ENCODE measurements at regions of chr6 and their contacts with region 1.

Region 1: GRCh38 chr6:148578245-148578732 is 168.5 kb upstream of the UST start:
- DNase-seq: peak; percentile 56
- ATAC-seq: peak; percentile 100
- H3K4me3 Mint-ChIP-seq: no peak overlapping the region
- H3K27ac Mint-ChIP-seq: peak overlapping the region; percentile 55
- H3K4me1 Mint-ChIP-seq: peaks cover 14% of the 10 kb centered on the region
- H3K27me3 Mint-ChIP-seq: peaks cover 7% of the 10 kb centered on the region
- CTCF ChIP-seq: no peak

Region 2: DNA sequence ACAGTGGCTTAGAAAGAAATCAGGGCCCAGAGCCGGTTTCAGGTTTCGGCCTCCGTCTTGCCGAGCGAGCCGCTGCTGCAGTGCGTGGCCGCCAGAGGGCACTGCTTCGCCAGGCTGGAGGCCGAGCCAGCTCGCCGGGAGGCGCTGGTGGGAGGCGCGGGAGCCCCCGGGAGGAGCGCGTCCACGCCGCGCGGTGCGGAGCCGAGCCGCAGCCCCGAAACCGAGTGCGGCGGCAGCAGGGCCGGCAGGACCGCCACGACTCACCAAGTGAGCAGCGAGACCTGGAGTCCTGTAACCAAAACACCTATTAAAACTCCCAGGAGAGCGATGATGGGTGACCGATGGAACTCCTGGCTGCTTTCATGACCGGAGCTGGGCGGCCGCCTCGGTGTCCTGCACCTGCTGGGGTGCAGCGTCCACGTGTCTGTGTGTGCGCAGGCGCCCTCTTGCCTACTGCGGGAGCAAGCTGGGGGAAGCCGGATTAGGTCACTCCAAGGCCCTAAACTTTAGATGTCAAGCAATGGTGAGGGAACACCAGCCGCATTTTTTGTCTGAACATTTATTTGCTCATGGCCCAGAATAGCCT is 18.3 kb before region 1 on chr6:
- CTCF ChIA-PET with region 1: interaction called, 18 read pairs
- POLR2A ChIA-PET with region 1: interaction called, 3 read pairs
- intact Hi-C with region 1: no loop called
- DNase-seq: peak; percentile 74
- ATAC-seq: peak; percentile 87
- H3K4me3 Mint-ChIP-seq: peak overlapping the region; percentile 57
- H3K27ac Mint-ChIP-seq: no peak overlapping the region
- H3K4me1 Mint-ChIP-seq: peaks cover 15% of the 10 kb centered on the region
- H3K27me3 Mint-ChIP-seq: peaks cover 9% of the 10 kb centered on the region
- CTCF ChIP-seq: peak; percentile 18

Region 3: DNA sequence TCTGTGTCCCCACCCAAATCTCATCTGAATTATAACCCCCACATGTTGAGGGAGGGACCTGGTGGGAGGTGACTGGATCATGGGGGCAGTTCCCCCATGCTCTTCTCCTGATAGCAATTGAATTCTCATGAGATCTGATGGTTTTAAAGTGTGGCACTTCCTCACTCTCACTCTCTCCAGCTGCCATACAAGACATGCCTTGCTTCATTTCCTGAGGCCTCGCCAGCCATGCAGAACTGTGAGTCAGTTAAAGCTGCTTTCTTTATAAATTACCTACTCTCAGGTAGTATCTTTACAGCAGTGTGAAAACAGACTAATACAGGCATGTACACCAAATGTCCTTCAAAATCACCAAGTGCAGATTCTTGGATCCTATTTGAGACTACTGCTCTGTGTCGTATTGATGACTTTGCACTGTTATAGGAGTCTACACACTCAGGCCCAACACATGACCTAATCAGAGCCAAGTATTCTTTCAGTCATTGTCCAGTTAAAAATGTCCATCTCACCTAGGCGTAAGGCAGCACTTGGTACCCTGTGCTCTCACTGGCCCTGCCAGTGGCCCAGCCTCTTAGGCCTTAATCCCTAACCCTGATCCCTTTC is 115.7 kb after region 1 on chr6:
- CTCF ChIA-PET with region 1: interaction called, 11 read pairs
- POLR2A ChIA-PET with region 1: no interaction called
- intact Hi-C with region 1: no loop called
- DNase-seq: peak; percentile 33
- ATAC-seq: peak; percentile 98
- H3K4me3 Mint-ChIP-seq: peak overlapping the region; percentile 62
- H3K27ac Mint-ChIP-seq: peak overlapping the region; percentile 90
- H3K4me1 Mint-ChIP-seq: peaks cover 27% of the 10 kb centered on the region
- H3K27me3 Mint-ChIP-seq: no peaks in the 10 kb centered on the region
- CTCF ChIP-seq: no peak

Region 4: DNA sequence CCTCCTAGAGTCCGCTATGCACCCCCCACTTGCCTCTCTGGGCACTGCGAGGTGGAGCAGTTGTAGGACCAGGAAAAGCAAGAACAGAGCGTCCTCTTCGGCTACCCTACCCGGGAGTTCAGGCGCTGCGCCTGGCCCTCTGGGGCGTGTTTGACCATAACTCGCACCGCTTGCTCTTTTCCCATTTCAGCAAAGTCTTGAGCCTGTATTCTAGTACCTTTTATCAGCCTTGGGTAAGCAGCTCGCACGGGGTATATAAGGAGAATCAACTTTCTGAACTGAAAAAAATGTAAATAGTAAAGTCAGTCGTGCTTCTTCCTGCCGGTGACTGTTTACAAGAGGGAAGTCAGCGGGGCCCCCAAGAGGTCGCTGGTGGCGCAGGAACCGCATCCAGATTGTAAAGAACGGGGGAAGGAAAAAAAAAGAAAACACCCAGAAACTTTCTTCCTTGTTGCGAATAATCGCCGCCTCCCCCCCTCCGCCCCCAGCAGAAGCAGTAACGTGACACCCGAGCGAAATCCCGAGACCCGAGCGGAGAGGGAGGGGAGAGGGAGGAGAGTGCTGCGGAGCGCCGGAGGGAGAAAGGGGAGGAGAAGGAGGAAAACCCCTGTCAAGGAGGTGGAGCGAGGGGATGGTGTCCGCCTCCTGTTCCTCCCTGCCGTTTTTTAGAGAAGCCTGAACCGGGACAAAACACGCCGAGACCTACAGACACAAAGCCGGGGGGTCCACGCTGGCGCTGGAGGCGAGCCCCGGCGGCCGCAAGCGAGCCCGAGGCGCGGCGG is 168.3 kb after region 1 on chr6 and contains the start of gene UST:
- CTCF ChIA-PET with region 1: interaction called, 21 read pairs
- POLR2A ChIA-PET with region 1: interaction called, 9 read pairs
- intact Hi-C with region 1: loop called (anchors 1 kb)
- DNase-seq: peak; percentile 55
- ATAC-seq: peak; percentile 47
- H3K4me3 Mint-ChIP-seq: peak within 1 kb of the TSS; percentile 95
- H3K27ac Mint-ChIP-seq: peak within 1 kb of the TSS; percentile 94
- H3K4me1 Mint-ChIP-seq: peaks cover 42% of the 10 kb centered on the region
- H3K27me3 Mint-ChIP-seq: no peaks in the 10 kb centered on the region
- CTCF ChIP-seq: no peak
- total RNA-seq, gene UST: 14.3 and 18.1 TPM in 2 replicates

Region 5: GRCh38 chr6:148907573-148907972 is 329.3 kb after region 1 on chr6:
- CTCF ChIA-PET with region 1: no interaction called
- POLR2A ChIA-PET with region 1: no interaction called
- intact Hi-C with region 1: no loop called
- DNase-seq: no peak
- ATAC-seq: peak; percentile 92
- H3K4me3 Mint-ChIP-seq: no peak overlapping the region
- H3K27ac Mint-ChIP-seq: peak overlapping the region; percentile 53
- H3K4me1 Mint-ChIP-seq: peaks cover 13% of the 10 kb centered on the region
- H3K27me3 Mint-ChIP-seq: no peaks in the 10 kb centered on the region
- CTCF ChIP-seq: no peak

Region 6: DNA sequence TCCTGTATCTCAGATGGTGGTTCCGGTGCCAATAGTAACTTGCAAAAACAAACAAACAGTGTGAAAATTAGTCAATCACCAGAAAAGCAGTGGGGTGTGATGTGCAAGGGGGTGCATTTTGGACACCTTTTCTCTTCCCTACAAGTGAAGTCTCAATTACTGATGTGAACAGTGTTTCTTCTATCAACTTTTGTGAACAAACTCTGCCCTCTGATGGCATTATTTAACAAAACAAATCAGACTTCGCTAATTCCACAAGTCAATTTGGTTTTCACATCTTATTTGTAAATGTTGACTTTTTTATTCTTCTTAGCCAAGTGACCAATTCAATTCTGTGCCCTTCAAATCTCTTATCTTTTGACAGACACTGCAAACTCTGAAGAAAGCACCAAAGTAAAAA is 380.7 kb after region 1 on chr6:
- CTCF ChIA-PET with region 1: interaction called, 15 read pairs
- POLR2A ChIA-PET with region 1: no interaction called
- intact Hi-C with region 1: no loop called
- DNase-seq: no peak
- ATAC-seq: no peak
- H3K4me3 Mint-ChIP-seq: no peak overlapping the region
- H3K27ac Mint-ChIP-seq: no peak overlapping the region
- H3K4me1 Mint-ChIP-seq: peaks cover 11% of the 10 kb centered on the region
- H3K27me3 Mint-ChIP-seq: no peaks in the 10 kb centered on the region
- CTCF ChIP-seq: no peak

Region 7: DNA sequence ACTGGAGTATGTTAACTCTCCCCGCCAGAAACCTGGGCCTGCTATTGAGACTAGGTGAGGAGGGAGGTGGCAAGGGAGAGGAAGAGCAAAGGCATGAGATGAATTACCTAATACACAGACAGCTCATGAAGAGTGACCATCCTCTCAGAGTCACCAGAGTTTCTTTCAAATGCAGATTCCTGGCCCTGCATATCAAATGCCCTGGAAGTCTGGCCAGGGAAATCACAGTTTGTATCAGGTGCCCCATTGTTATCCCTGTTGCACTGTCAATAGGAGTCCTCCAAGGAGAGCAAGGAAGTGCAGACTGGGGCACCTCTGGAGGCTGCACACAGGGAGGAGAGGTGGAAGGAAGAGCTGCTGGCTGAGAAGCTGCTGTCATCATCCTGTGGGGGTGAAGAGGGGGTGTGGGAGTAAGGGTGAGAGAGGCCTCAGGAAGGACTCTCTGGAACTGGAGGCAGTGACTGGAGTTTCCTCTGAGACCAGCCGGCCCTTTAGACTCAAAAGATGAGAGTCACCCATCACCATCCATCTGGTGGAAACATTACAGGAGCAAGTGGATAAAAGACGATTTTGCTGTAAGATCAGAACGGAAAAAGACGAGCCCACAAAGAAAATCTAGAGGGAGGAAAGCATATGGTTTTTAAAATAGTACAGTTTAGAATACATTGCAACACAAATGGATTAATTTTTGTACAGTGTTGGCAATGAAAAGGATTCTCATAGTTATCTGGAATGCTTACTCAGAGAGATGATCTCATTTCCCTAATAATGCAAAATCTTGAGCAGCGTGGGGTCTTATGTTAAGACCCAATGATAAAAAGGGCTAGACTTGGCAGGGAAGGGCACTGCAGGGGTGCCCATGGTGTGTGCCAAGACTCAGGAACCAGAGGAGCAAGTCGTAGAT is 436.6 kb after region 1 on chr6:
- CTCF ChIA-PET with region 1: no interaction called
- POLR2A ChIA-PET with region 1: no interaction called
- intact Hi-C with region 1: no loop called
- DNase-seq: no peak
- ATAC-seq: no peak
- H3K4me3 Mint-ChIP-seq: no peak overlapping the region
- H3K27ac Mint-ChIP-seq: no peak overlapping the region
- H3K4me1 Mint-ChIP-seq: no peaks in the 10 kb centered on the region
- H3K27me3 Mint-ChIP-seq: no peaks in the 10 kb centered on the region
- CTCF ChIP-seq: no peak

Region 8: GRCh38 chr6:149513915-149514314 is 935.6 kb after region 1 on chr6:
- CTCF ChIA-PET with region 1: no interaction called
- POLR2A ChIA-PET with region 1: no interaction called
- intact Hi-C with region 1: loop called (anchors 10 kb)
- DNase-seq: no peak
- ATAC-seq: no peak
- H3K4me3 Mint-ChIP-seq: no peak overlapping the region
- H3K27ac Mint-ChIP-seq: peak overlapping the region; percentile 50
- H3K4me1 Mint-ChIP-seq: peaks cover 23% of the 10 kb centered on the region
- H3K27me3 Mint-ChIP-seq: no peaks in the 10 kb centered on the region
- CTCF ChIP-seq: no peak

Measured in activated B cell treated with CpG ODN at 0.5 μM for 24 hours (primary cell).